ENCODE measurements at regions of chr1 and their contacts with region 1.

Region 1: DNA sequence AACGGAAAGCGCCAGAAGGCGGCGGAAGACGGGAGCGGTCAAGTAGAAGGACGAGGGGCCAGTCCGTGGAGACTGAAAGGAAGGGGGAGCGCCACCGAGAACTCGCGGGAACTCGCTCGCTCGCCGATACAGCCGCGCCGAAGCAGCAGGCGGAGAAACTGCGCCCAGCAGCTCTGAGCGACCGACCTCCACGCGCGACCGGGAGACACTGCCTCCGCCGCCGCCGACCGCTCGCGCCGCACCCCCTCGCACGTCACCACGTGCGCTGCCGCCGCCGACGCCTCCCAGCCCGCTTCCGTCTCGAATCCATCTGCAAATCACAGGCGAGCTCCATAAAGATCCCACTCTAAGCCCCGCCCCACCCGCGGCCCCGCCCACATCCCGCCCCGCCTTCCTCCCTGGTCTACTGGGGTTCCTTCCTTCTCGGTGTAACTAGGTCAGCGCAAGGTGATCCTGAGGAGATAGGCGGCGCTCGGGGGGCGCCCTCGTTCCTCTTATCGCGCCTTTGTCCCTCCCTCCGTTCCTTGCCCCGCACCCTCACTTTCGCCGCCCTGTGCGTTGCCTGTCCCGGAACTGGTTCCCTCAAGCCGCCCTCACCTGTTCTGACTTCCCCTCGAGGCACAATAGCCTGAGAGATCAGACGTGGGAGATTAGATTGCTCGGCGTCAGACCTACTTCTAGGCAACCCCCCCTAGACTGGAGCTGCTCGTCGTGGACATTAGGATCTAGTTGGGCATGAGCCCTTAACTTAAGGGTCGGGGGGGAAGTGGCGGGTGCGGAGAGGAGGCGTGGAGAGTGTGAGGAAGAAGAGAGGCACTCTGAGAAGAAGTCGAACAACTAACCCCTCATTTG is at the start of gene IVNS1ABP:
- DNase-seq: peak; percentile 91 to 95
- H3K4me3 ChIP-seq: peak within 1 kb of the TSS; percentile 97
- H3K27ac ChIP-seq: peak within 1 kb of the TSS; percentile 94
- H3K4me1 ChIP-seq: peaks cover 37% of the 10 kb centered on the region
- H3K27me3 ChIP-seq: no peaks in the 10 kb centered on the region
- CTCF ChIP-seq: peak; percentile 33; the same call in 1 of the 2 replicates
- total RNA-seq, gene IVNS1ABP: 38.8 and 44.3 TPM in 2 replicates

Region 2: DNA sequence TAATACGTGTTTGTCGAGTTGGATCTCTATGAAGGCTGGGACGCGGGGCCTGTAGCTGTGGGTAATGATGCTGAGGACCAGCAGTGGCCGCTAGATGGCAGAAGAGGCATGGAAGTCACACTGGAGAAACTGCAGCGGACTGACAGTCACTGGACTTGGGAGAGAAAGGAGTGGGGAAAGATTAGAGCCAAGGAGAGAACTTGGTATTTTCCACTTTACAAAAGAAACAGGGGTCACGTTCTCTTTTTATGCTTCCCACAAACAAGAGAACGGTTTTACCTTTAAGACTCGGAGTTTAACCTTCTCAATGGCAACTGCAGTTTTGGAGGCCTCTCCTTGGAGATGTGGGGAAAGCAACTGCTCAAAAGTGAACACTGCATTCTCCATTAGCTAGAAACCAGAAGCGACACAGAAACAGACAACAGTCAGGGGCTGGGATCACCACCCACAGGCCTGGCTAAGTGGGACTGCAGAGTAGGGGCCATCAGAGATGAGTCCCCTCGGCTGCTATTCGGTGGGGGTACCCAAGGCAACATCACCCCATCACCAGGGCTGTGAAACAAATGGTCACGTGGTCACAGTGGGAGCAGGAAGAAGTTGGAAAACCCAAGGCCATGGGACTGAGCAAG is 511.5 kb before region 1 on chr1:
- CTCF ChIA-PET with region 1: no interaction called
- POLR2A ChIA-PET with region 1: no interaction called
- intact Hi-C with region 1: loop called (anchors 1 kb)
- DNase-seq: peak; percentile 63 to 81
- H3K4me3 ChIP-seq: no peak overlapping the region
- H3K27ac ChIP-seq: no peak overlapping the region
- H3K4me1 ChIP-seq: peaks cover 17% of the 10 kb centered on the region
- H3K27me3 ChIP-seq: no peaks in the 10 kb centered on the region
- CTCF ChIP-seq: peak; percentile 90

Region 3: DNA sequence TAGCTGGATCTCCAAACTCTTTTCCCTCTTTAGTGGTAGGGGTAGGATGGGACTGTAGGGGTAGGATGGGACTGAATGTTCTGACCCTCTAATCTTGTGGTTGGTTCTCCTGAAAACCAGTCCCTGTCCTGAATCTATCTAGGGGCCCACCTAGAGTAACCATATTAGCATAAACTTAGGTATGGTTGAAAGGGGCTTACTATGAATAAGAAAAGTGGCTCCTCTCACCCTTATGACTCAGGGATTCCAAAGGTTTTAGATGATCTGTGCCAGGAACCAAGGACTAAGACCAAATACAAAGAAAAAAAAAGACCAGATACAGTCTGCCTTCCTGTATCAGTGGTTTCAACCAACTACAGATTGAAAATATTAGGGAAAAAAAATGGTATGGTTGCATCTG is 243.0 kb before region 1 on chr1:
- CTCF ChIA-PET with region 1: no interaction called
- POLR2A ChIA-PET with region 1: no interaction called
- intact Hi-C with region 1: no loop called
- DNase-seq: no peak
- H3K4me3 ChIP-seq: no peak overlapping the region
- H3K27ac ChIP-seq: no peak overlapping the region
- H3K4me1 ChIP-seq: no peaks in the 10 kb centered on the region
- H3K27me3 ChIP-seq: no peaks in the 10 kb centered on the region
- CTCF ChIP-seq: no peak

Region 4: DNA sequence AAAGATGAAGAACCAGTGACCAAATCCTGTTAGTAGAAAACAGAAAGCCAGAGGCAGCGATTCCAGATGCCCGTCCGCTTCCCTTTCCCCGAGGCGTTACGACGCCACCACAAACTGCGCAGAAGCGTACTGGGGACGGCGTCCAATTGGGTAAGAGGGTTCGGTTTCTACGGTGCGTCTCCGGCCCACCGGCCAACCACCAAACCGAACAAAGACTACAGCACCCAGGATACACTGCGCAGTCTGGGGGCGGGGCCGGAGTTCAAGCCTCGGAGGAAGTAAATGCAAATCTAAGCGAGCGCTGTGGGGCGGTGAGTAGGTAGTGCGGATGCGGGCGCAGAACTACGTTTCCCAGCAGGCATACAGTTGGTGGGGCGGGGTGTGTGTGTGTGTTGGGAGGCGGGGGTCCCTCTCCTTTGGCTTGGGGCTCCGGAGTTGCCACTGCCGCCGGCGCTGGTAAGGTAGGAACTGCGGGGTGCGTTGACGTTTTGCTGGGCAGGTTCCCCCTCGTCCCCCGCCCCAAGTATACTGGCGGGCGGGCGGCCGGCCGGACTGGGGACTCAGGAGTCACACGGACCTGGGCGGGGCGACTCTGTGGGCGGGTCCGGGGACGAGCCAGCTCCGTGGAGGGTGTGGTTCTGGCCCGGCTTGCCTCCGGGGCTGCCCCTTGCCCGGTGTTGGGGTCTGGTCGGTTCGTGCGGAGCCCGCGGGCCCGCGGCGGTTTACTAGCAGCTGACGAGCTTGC is 160.2 kb before region 1 on chr1 and contains the starts of genes SWT1 and TRMT1L:
- CTCF ChIA-PET with region 1: no interaction called
- POLR2A ChIA-PET with region 1: no interaction called
- intact Hi-C with region 1: loop called (anchors 1 kb)
- DNase-seq: peak; percentile 95 to 98
- H3K4me3 ChIP-seq: peak within 1 kb of the TSS; percentile 82
- H3K27ac ChIP-seq: peak within 1 kb of the TSS; percentile 55
- H3K4me1 ChIP-seq: peaks cover 21% of the 10 kb centered on the region
- H3K27me3 ChIP-seq: no peaks in the 10 kb centered on the region
- CTCF ChIP-seq: no peak
- total RNA-seq, gene SWT1: 2.9 and 3.6 TPM in 2 replicates
- total RNA-seq, gene TRMT1L: 16.9 and 18.3 TPM in 2 replicates

Region 5: GRCh38 chr1:185367218-185367617 is 50.0 kb after region 1 on chr1:
- CTCF ChIA-PET with region 1: interaction called, 12 read pairs
- POLR2A ChIA-PET with region 1: no interaction called
- intact Hi-C with region 1: no loop called
- DNase-seq: no peak
- H3K4me3 ChIP-seq: no peak overlapping the region
- H3K27ac ChIP-seq: no peak overlapping the region
- H3K4me1 ChIP-seq: no peaks in the 10 kb centered on the region
- H3K27me3 ChIP-seq: no peaks in the 10 kb centered on the region
- CTCF ChIP-seq: no peak

Region 6: GRCh38 chr1:185377831-185378230 is 60.6 kb after region 1 on chr1:
- CTCF ChIA-PET with region 1: no interaction called
- POLR2A ChIA-PET with region 1: no interaction called
- intact Hi-C with region 1: no loop called
- DNase-seq: no peak
- H3K4me3 ChIP-seq: no peak overlapping the region
- H3K27ac ChIP-seq: no peak overlapping the region
- H3K4me1 ChIP-seq: no peaks in the 10 kb centered on the region
- H3K27me3 ChIP-seq: no peaks in the 10 kb centered on the region
- CTCF ChIP-seq: no peak

Region 7: GRCh38 chr1:185566995-185567394 is 249.7 kb after region 1 on chr1:
- CTCF ChIA-PET with region 1: interaction called, 4 read pairs
- POLR2A ChIA-PET with region 1: interaction called, 3 read pairs
- intact Hi-C with region 1: loop called (anchors 1 kb)
- DNase-seq: peak; percentile 25 to 69
- H3K4me3 ChIP-seq: no peak overlapping the region
- H3K27ac ChIP-seq: no peak overlapping the region
- H3K4me1 ChIP-seq: no peaks in the 10 kb centered on the region
- H3K27me3 ChIP-seq: no peaks in the 10 kb centered on the region
- CTCF ChIP-seq: no peak

Region 8: DNA sequence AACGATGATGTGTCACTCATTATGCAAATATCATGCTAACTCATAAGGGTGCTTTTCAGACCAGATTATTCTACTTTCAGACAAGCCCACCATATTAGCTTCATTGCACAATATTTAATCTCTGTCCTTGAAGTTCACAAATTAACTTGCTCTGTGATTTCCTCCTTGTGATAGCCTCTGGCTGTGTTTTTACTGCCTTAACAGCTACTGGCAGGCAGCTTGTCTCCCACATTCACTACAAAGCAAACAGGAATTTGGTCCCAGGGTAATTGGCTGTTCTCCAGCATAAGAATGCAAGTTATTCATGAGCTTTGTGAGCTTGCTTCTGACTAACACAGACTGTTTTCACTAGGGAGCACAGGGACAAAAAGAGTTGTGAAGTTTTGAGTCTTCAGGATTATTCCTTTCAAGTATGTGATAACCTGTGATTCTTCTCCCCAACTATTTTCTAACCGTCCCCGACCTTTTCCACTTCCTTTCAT is 329.0 kb after region 1 on chr1:
- CTCF ChIA-PET with region 1: interaction called, 3 read pairs
- POLR2A ChIA-PET with region 1: no interaction called
- intact Hi-C with region 1: loop called (anchors 1 kb)
- DNase-seq: peak; percentile 74 to 78
- H3K4me3 ChIP-seq: no peak overlapping the region
- H3K27ac ChIP-seq: peak overlapping the region; percentile 11; the same call in 1 of the 2 replicates
- H3K4me1 ChIP-seq: peaks cover 16% of the 10 kb centered on the region; the same call in 1 of the 2 replicates
- H3K27me3 ChIP-seq: no peaks in the 10 kb centered on the region
- CTCF ChIP-seq: no peak

Region 9: DNA sequence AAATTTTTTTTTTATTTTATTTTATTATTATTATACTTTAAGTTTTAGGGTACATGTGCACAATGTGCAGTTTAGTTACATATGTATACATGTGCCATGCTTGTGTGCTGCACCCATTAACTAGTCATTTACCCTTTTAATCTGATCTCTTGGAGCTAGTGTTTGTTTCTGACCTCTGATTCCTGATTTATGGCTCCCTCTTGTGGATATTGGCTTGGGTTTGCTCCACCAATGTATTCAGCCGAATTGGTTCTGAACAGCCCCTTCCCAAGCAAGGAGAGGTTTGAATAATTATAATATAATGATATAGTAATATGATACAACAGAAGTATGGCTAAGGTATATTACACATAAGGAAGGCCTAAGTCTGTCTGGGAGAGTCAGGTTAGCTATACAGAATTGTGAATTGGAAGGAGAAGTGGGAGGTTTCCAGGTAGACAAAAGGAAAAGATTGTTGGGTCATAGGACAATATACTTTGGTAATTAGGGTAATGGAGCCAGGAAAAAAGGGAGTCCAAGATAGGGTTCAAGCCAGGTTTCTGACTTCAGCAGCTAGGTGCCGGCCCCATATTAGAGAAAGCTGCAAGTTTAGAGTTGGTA is 363.9 kb after region 1 on chr1:
- CTCF ChIA-PET with region 1: interaction called, 3 read pairs
- POLR2A ChIA-PET with region 1: no interaction called
- intact Hi-C with region 1: loop called (anchors 1 kb)
- DNase-seq: peak in 1 of 2 experiments; percentile 16
- H3K4me3 ChIP-seq: no peak overlapping the region
- H3K27ac ChIP-seq: no peak overlapping the region
- H3K4me1 ChIP-seq: no peaks in the 10 kb centered on the region
- H3K27me3 ChIP-seq: no peaks in the 10 kb centered on the region
- CTCF ChIP-seq: peak; percentile 70

Measured in PC-9 (cell line).